Posterior vena cava (tissue), 2 donors: ENCODE measurements at regions of chr6 and their contacts with region 1.

Region 1: DNA sequence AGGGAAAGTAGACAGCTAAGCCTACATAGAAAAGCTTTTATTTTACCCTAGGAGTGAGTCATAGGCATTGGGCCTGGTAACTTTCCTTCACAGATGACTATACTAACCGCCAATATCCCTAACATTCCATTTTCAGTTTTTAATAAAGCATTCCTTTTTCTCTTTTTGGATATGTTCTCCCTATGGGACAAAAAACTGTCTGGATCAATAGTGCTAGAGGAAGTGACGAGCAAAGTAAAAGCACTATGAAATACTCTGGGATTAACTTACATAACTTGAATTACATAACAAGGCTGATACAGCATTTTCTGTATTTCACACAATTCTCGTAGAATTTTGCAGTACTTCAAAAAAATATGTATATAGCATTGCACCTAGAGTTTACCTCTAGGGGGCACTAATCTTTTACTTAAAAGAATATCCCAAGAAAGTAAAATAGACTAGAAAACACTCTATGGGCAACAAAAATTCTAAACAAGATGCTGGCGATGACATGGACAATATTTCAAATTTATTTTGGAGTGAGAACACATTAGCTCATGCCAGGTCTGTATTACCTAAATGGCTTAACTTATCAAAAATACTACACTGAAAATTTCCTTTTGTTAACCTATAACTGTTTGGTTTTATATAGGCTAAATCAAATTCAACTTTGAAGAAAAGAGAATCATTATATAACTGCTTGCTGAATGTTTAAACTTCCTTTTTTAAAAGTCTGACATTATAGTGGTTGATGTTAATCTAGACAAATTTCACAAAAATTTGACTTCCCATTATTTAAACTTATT is 66.3 kb upstream of the DST start:
- DNase-seq: no peak

Region 2: DNA sequence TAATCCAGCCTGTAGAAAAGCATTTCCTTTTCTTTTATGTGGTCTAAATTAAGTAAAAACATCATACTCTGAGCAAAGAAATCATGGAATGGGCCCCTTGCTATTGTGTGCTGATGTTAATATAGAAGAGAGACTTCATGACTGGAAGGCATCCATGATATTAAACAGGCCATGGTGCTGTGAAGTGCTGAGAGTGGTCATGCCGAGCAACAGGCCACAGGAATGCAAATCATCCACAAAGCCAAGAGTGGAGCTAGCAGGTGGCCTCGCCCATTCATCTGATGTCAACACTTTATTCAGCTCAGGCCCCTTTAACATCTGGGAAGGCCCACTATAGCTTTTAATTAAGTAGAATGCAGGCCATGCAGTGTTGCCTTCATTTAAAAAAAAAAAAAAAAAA is 1014.9 kb before region 1 on chr6:
- intact Hi-C with region 1: no loop called
- DNase-seq: no peak

Region 3: DNA sequence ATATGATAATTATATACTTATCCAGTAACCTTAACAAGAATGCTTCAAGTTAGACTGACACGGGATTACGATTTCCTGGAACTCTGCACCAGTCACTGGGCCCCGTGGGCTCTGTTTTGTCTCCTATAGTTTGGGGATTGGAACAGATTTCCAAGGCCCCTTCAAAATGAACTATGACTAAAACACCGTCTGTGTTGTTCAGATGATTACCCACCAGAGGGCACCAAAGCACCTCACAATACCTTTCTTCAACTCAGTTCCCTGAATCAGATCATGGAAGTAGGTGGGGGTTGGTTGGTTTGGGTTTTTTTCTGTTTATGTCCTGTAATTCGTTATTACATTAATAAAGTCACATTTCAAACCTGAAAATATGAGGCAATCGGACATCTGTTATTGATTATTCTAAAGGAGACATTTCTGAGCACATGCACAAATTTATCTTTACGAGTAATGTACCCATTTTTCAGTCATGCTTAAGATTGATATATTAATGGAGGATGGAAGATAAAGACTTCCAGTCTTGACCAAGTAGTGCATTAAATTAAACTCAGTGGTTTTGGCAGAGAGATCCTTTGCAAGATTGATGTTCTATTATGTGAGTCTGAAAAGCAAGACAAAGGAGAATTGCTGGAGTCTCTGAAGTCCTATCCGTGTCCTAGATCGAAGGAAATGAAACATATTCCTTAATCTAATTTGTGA is 349.7 kb before region 1 on chr6:
- intact Hi-C with region 1: loop called in 1 of 2 experiments (anchors 10 kb)
- DNase-seq: no peak

Region 4: GRCh38 chr6:56752009-56752408 is 43.0 kb after region 1 on chr6:
- intact Hi-C with region 1: no loop called
- DNase-seq: no peak

Region 5: DNA sequence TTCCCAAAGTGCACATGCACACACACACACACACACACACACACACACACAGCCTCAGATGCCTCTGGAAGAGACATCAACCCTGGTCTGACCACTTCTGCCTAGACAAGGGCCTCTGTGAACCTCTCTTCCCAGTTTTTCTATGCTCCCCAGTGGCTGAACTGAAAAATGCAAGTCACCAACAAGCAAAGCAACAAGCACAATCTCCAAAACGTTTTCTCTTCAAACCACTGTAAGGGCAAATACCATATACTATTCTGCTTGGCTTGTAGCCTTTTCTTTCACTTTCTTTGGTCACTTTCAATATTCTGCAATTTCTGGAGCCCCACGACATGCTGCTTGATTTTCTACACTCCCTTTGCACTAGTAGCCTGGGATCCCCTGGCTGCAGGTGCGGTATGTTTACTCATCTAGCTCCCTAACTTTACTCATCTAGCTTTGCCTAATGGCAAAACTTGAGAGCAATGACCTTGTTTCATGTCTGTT is 55.1 kb after region 1 on chr6:
- intact Hi-C with region 1: loop called in 1 of 2 experiments (anchors 10 kb)
- DNase-seq: no peak

Region 6: GRCh38 chr6:56843573-56844349 is 134.8 kb after region 1 on chr6:
- intact Hi-C with region 1: loop called (anchors 10 kb)
- DNase-seq: peak; percentile 90